ENCODE measurements at regions of chr1 and their contacts with region 1.

Region 1: GRCh38 chr1:246971090-246971721 is 36.7 kb downstream of the ZNF695 start:
- DNase-seq: peak; percentile 47 to 82
- H3K4me3 ChIP-seq: no peak overlapping the region
- H3K27ac ChIP-seq: no peak overlapping the region
- H3K4me1 ChIP-seq: no peaks in the 10 kb centered on the region
- H3K27me3 ChIP-seq: no peaks in the 10 kb centered on the region
- CTCF ChIP-seq: peak; percentile 73 to 90 (median 83)
- EP300 ChIP-seq: no peak
- POLR2A ChIP-seq: no peak
- RAD21 ChIP-seq: peak; percentile 76 to 77

Region 2: DNA sequence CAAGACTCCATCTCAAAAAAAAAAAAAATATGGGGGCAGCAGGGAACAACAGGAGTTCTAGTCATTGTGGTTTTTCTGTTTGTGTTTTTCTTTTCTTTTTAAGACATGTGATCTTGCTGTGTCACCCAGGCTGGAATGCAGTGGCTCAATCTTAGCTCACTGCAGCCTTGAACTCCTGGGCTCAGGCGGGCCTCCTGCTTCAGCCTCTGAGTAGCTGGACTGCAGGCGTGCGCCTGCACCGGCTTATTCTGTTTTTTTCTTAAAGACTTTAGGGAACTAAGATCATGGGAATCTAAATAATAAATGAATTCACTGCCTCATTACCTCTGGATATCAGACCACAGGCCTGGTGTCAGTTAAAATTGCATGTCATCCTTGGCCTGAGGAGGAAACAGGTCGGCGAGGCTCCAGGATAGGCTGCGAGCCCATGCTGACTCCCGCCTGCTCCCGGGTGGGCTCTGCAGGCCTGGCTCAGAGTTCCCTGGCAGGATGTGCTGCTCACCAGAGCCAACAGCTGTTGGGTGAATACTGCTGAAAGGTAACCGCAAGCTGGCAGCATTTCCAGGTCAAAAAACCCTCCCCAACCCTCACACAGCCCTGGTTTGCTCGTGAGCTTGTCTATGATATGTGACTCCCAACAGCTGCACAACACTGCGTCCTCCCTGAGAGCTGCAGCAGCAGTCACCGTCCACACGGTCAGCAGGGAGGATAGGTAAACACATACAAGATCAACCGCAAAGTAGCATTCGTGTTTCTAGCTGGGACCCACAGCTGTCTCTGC is 188.9 kb before region 1 on chr1:
- CTCF ChIA-PET with region 1: no interaction called
- POLR2A ChIA-PET with region 1: no interaction called
- DNase-seq: no peak
- H3K4me3 ChIP-seq: no peak overlapping the region
- H3K27ac ChIP-seq: no peak overlapping the region
- H3K4me1 ChIP-seq: peaks cover 0 to 3% (median 0%) of the 10 kb centered on the region in 4 experiments; a peak in 1 of 7 replicates
- H3K27me3 ChIP-seq: no peaks in the 10 kb centered on the region
- CTCF ChIP-seq: no peak
- EP300 ChIP-seq: no peak
- POLR2A ChIP-seq: no peak
- RAD21 ChIP-seq: no peak

Region 3: GRCh38 chr1:246934765-246935164 is 36.4 kb before region 1 on chr1:
- CTCF ChIA-PET with region 1: interaction called, 11 read pairs
- POLR2A ChIA-PET with region 1: no interaction called
- DNase-seq: no peak
- H3K4me3 ChIP-seq: no peak overlapping the region
- H3K27ac ChIP-seq: no peak overlapping the region
- H3K4me1 ChIP-seq: peaks cover 0 to 4% (median 0%) of the 10 kb centered on the region in 4 experiments; a peak in 2 of 7 replicates
- H3K27me3 ChIP-seq: no peaks in the 10 kb centered on the region
- CTCF ChIP-seq: no peak
- EP300 ChIP-seq: no peak
- POLR2A ChIP-seq: no peak
- RAD21 ChIP-seq: no peak

Region 4: DNA sequence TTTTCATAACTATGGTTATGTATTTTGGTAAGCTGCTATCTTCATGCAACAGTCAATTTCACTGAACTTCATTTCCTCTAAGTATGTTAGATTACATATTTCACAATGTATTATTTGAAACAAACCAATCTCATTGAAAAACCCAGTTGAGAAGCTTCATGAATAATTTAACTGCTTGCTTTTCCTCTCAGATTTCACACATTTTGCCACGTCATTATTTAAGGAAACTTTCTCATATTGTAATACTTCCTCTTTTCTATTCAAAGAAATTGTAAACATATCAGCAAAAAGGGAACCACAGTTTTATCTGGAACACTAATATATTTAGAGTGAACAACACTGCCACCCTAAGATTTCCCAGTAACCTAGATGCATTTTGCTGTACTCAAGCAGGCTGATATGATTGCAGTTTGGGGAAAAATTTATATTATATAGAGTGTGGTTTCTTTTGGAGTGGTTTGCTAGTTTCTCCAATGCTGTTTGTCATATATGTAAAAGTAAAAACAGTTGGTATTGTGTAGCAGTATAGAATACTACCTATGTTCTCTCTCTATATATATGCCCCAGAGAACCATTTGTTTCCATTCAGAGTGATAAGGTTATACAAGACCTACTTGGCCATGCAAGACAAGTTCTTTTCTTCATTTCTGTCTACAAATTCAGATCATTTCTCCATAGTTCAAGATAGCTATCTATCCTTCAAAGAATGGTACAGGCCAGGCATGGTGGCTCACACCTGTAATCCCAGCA is 11.1 kb before region 1 on chr1:
- CTCF ChIA-PET with region 1: interaction called, 18 read pairs
- POLR2A ChIA-PET with region 1: no interaction called
- DNase-seq: no peak
- H3K4me3 ChIP-seq: no peak overlapping the region
- H3K27ac ChIP-seq: no peak overlapping the region
- H3K4me1 ChIP-seq: no peaks in the 10 kb centered on the region
- H3K27me3 ChIP-seq: no peaks in the 10 kb centered on the region
- CTCF ChIP-seq: no peak
- EP300 ChIP-seq: no peak
- POLR2A ChIP-seq: no peak
- RAD21 ChIP-seq: no peak

Region 5: GRCh38 chr1:246989901-246990300 is 18.7 kb after region 1 on chr1:
- CTCF ChIA-PET with region 1: no interaction called
- POLR2A ChIA-PET with region 1: no interaction called
- DNase-seq: no peak
- H3K4me3 ChIP-seq: no peak overlapping the region
- H3K27ac ChIP-seq: no peak overlapping the region
- H3K4me1 ChIP-seq: no peaks in the 10 kb centered on the region
- H3K27me3 ChIP-seq: no peaks in the 10 kb centered on the region
- CTCF ChIP-seq: no peak
- EP300 ChIP-seq: no peak
- POLR2A ChIP-seq: no peak
- RAD21 ChIP-seq: no peak

Measured in H1 (cell line).